ENCODE measurements at regions of chr1 and their contacts with region 1.

Region 1: GRCh38 chr1:59150577-59151391 is 146.1 kb upstream of the FGGY start:
- DNase-seq: peak; percentile 78 to 89
- ATAC-seq: peak; percentile 86 to 87
- H3K4me3 ChIP-seq: peak overlapping the region; percentile 35; the same call in 2 of the 3 replicates
- H3K27ac ChIP-seq: peak overlapping the region; percentile 93 to 97
- H3K4me1 ChIP-seq: peaks cover 57% of the 10 kb centered on the region
- CTCF ChIP-seq: no peak
- EP300 ChIP-seq: peak; percentile 38 to 67; a peak in 2 of 5 replicates
- POLR2A ChIP-seq: no peak
- RAD21 ChIP-seq: peak; percentile 30 to 51; a peak in 3 of 5 replicates

Region 2: DNA sequence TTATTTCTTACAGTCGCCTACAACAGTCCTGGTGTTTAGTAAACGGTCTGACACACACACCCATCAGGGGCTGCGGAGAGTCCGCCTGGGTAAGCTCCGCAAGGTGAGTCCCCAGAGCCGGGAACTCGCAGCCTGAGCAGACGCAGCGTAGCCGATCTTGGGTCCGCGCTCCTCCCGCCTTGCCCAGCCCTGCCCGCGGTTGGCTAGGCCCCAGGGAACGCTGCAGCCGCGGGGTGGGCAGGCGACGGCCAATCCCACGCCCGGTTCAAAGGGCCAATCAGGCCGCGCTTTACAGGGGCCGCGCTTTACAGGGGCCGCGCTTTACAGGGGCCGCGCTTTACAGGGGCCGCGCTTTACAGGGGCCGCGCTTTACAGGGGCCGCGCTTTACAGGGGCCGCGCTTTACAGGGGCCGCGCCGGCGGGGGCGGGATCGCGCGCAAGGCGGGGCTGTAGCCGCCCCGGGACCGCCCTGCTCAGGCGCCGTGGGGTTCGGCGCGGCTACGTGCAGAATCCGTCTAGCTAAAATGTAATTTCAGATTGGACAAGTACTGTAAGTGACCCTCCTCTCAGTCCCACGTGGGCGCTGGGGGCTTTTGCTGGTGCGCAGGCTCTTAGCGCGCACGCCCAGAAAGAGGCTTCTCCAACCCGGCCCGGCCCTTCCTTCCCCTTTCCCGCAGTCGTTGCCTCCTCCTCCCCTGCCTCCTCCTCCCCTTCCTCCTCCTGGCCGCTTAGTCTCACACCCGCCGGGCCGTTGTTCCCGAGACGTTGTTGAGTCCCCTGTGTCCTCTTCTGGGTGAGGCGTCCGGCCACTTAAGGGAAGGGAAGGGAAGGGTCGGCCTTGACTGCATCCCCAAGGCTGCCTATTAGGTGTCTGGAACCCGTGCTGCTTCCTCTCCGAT is 145.8 kb after region 1 on chr1 and contains the start of gene FGGY:
- CTCF ChIA-PET with region 1: no interaction called
- POLR2A ChIA-PET with region 1: interaction called, 16 read pairs
- DNase-seq: peak; percentile 92 to 96
- ATAC-seq: peak; percentile 96 to 97
- H3K4me3 ChIP-seq: peak within 1 kb of the TSS; percentile 72
- H3K27ac ChIP-seq: peak within 1 kb of the TSS; percentile 97 to 98
- H3K4me1 ChIP-seq: peaks cover 27% of the 10 kb centered on the region
- CTCF ChIP-seq: no peak
- EP300 ChIP-seq: no peak
- POLR2A ChIP-seq: peak; percentile 78
- RAD21 ChIP-seq: no peak; a peak in 1 of 5 replicates
- polyA plus RNA-seq, gene FGGY: 4.8 and 5.1 TPM in 2 replicates

Measured in A549 (cell line).